Caco-2 (cell line): ENCODE measurements at regions of chr5 and their contacts with region 1.

Region 1: GRCh38 chr5:95620030-95620869 is at the start of gene GPR150:
- DNase-seq: peak; percentile 69 to 80
- H3K4me3 ChIP-seq: peak within 1 kb of the TSS; percentile 78
- H3K4me3 Mint-ChIP-seq: peak within 1 kb of the TSS; percentile 73
- H3K27ac Mint-ChIP-seq: peak within 1 kb of the TSS; percentile 6
- H3K4me1 ChIP-seq: no peaks in the 10 kb centered on the region
- H3K4me1 Mint-ChIP-seq: no peaks in the 10 kb centered on the region
- H3K27me3 ChIP-seq: no peaks in the 10 kb centered on the region
- H3K27me3 Mint-ChIP-seq: peaks cover 11% of the 10 kb centered on the region
- CTCF ChIP-seq: peak in 1 of 2 experiments; percentile 3
- total RNA-seq, gene GPR150: 0.21 and 0.27 TPM in 2 replicates

Region 2: DNA sequence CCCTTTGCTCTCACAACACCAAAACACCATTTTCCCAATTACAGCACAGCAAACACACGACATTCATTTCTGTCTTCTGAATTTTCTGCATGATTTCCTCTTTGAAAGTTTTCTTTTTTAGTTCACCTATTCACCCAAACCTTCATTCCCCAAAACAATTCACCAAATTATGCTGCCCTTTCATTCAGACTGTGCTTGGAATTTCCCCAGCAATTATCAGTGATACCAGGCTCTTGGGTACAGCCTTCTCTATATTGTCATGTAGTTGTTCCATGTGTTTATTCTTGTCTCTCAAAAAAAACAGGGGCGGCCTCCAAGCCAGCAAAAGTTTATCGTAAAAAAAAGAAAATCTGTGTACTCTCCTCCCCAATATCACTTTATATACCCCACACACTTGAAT is 1531.1 kb after region 1 on chr5:
- CTCF ChIA-PET with region 1: no interaction called
- POLR2A ChIA-PET with region 1: interaction called, 11 read pairs
- intact Hi-C with region 1: no loop called
- DNase-seq: no peak
- H3K4me3 ChIP-seq: no peak overlapping the region
- H3K4me3 Mint-ChIP-seq: no peak overlapping the region
- H3K27ac Mint-ChIP-seq: no peak overlapping the region
- H3K4me1 ChIP-seq: no peaks in the 10 kb centered on the region
- H3K4me1 Mint-ChIP-seq: no peaks in the 10 kb centered on the region
- H3K27me3 ChIP-seq: no peaks in the 10 kb centered on the region
- H3K27me3 Mint-ChIP-seq: no peaks in the 10 kb centered on the region
- CTCF ChIP-seq: no peak